K562 (cell line): ENCODE measurements at regions of chr10 and their contacts with region 1.

Region 1: DNA sequence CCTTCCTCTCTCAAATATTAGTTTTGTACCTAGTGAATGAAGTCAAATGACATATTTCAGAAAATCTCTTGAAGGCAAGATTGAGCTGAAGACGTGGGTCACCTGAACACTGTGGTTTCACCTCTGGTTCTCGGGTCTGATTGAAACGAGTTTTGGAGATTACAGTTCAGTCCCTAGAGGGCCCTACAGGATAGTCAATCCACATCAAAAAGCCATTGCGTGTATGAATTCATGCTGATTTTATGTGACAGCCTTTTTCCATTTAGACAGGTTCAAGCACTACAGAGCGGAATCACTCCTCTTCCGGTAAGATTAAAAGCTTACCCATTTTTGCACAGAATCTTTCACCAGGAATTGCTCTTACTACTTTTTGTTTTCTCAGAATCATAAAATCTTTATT is 62.2 kb downstream of the VIM start:
- DNase-seq: peak; percentile 21 to 67 (median 42)
- ATAC-seq: peak; percentile 93
- H3K4me3 ChIP-seq: no peak overlapping the region
- H3K27ac ChIP-seq: no peak overlapping the region
- H3K4me1 ChIP-seq: peaks cover 0 to 3% of the 10 kb centered on the region in 2 experiments; a peak in 1 of 5 replicates
- H3K27me3 ChIP-seq: no peaks in the 10 kb centered on the region
- CTCF ChIP-seq: peak; percentile 63 to 84 (median 63)
- EP300 ChIP-seq: no peak
- POLR2A ChIP-seq: no peak
- RAD21 ChIP-seq: peak; percentile 77 to 95

Region 2: GRCh38 chr10:16891375-16892313 is 398.6 kb before region 1 on chr10:
- CTCF ChIA-PET with region 1: no interaction called
- POLR2A ChIA-PET with region 1: no interaction called
- in situ Hi-C with region 1: no loop called
- intact Hi-C with region 1: no loop called
- DNase-seq: peak; percentile 41 to 81 (median 55)
- ATAC-seq: peak; percentile 94
- H3K4me3 ChIP-seq: peak overlapping the region; percentile 20
- H3K27ac ChIP-seq: peak overlapping the region; percentile 77
- H3K4me1 ChIP-seq: peaks cover 0 to 6% of the 10 kb centered on the region in 2 experiments; a peak in 2 of 5 replicates
- H3K27me3 ChIP-seq: 0 out of 5 replicates have a peak, but pooled peaks cover 0 to 2% of the 10 kb centered on the region in 2 experiments
- CTCF ChIP-seq: peak; percentile 65 to 83 (median 82)
- EP300 ChIP-seq: peak; percentile 50; the same call in 1 of the 2 replicates
- POLR2A ChIP-seq: peak; percentile 100
- RAD21 ChIP-seq: peak; percentile 83 to 89

Region 3: DNA sequence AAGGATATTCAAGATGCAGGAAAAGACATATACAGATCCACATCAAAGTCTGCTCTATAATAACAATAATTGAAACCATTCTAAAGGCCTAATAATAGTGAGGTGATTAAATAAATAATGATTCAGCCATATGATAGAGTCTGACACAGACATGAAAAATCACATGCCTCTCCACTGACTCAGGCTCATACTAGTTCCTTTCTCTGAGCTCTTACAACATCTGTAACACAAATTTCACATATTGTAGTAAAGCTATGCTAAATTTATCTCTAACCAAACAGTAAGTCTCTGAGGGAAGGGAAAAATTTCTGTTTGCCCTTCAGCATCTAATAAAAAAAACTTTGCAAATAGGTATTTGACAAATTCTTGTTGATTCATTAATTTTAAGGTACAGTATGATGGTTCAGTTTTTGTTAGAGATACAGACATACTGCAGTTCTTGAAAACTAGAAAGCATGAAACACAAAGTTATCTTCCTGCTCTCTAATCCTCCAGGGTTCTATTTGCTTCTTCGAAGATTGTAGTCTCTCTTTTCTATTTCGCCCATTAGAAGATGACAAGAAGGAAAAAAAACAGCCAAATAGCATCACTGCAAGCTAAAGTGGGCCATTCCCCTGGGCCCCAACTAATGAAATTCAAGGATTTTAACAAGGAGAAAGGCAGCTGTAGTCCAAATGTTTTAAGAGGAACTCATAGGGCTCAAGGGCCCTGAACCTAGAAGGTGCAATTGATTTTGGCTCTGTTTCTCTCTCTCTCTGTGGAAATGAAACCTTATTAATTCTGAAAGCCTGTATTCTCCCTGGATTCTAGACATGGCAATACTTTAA is 214.5 kb before region 1 on chr10:
- CTCF ChIA-PET with region 1: no interaction called
- POLR2A ChIA-PET with region 1: no interaction called
- in situ Hi-C with region 1: no loop called
- intact Hi-C with region 1: no loop called
- DNase-seq: no peak
- ATAC-seq: no peak
- H3K4me3 ChIP-seq: no peak overlapping the region
- H3K27ac ChIP-seq: no peak overlapping the region
- H3K4me1 ChIP-seq: peaks cover 0 to 5% of the 10 kb centered on the region in 2 experiments; a peak in 1 of 5 replicates
- H3K27me3 ChIP-seq: no peaks in the 10 kb centered on the region
- CTCF ChIP-seq: no peak
- EP300 ChIP-seq: no peak
- POLR2A ChIP-seq: no peak
- RAD21 ChIP-seq: no peak

Region 4: DNA sequence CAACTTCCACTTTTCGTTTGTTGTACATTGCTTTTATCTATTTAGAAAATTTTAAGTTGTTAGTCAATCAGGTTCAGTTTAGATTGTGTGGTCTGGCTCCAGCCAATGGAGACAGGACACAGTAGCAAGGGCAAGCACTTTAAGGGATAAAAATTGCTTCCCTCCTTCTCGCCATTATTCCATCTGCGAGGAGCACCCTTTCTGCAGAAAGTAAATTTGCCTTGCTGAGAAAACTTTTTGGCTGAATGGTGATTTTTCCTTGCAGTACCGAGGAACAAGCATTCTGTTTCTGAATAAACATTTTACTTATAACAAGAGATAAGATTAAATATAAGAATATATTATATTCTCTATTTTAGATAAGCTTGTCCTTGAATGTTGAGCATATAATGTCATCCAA is 27.7 kb before region 1 on chr10:
- CTCF ChIA-PET with region 1: no interaction called
- POLR2A ChIA-PET with region 1: no interaction called
- in situ Hi-C with region 1: no loop called
- intact Hi-C with region 1: no loop called
- DNase-seq: no peak
- ATAC-seq: no peak
- H3K4me3 ChIP-seq: no peak overlapping the region
- H3K27ac ChIP-seq: no peak overlapping the region
- H3K4me1 ChIP-seq: no peaks in the 10 kb centered on the region; a peak in 1 of 5 replicates
- H3K27me3 ChIP-seq: no peaks in the 10 kb centered on the region
- CTCF ChIP-seq: no peak
- EP300 ChIP-seq: no peak
- POLR2A ChIP-seq: no peak
- RAD21 ChIP-seq: no peak

Region 5: GRCh38 chr10:17409170-17409733 is 119.0 kb after region 1 on chr10:
- CTCF ChIA-PET with region 1: no interaction called
- POLR2A ChIA-PET with region 1: no interaction called
- in situ Hi-C with region 1: no loop called
- intact Hi-C with region 1: loop called (anchors 5 kb)
- DNase-seq: peak in 2 of 4 experiments; percentile 34 to 62
- ATAC-seq: peak; percentile 67
- H3K4me3 ChIP-seq: no peak overlapping the region
- H3K27ac ChIP-seq: no peak overlapping the region
- H3K4me1 ChIP-seq: peaks cover 14 to 29% of the 10 kb centered on the region in 2 experiments; a peak in 4 of 5 replicates
- H3K27me3 ChIP-seq: no peaks in the 10 kb centered on the region
- CTCF ChIP-seq: peak; percentile 47 to 67 (median 50); a peak in 5 of 6 replicates
- EP300 ChIP-seq: no peak
- POLR2A ChIP-seq: no peak
- RAD21 ChIP-seq: peak; percentile 63 to 79

Region 6: DNA sequence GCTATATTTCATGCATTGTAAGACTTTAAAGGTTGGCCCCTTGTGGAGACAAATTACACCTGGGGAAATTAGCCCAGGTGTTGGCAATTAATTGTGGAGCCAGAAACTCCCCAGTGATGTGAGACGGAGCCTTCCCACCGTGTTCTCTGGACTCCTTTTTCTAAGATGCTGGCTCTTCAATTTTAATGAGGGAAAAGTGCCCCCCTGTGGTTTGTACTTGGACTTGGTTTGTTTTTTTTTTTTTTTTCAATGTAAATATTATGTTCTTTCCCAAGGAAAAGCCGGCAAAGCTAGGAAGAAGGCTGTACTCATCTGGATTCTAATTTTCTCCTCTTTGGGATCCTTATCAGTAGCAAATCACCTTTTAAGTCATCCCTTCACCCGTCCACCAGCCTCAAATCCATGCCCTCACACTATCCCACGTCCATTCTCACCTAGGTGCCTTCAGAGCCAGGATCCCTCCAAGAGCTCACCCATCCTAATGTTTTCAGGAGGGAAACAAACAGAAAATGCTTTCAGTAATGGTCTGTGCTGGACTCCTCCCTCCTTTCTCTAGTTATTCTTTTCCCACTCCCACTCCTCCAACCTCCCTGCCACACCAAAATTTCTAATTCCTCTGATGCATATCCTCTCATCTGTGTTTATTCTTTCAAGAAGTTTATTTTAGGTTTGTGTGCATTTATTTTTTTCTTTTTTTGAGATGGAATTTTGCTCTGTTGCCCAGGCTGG is 184.5 kb after region 1 on chr10:
- CTCF ChIA-PET with region 1: interaction called, 10 read pairs
- POLR2A ChIA-PET with region 1: no interaction called
- in situ Hi-C with region 1: loop called (anchors 5 kb)
- intact Hi-C with region 1: loop called (anchors 1 kb)
- DNase-seq: peak; percentile 30 to 76 (median 50)
- ATAC-seq: peak; percentile 69
- H3K4me3 ChIP-seq: peak overlapping the region; percentile 26
- H3K27ac ChIP-seq: no peak overlapping the region; the same call in 1 of the 3 replicates
- H3K4me1 ChIP-seq: peaks cover 3 to 12% of the 10 kb centered on the region in 2 experiments; a peak in 2 of 5 replicates
- H3K27me3 ChIP-seq: no peaks in the 10 kb centered on the region
- CTCF ChIP-seq: peak; percentile 41 to 69 (median 46); a peak in 4 of 6 replicates
- EP300 ChIP-seq: no peak
- POLR2A ChIP-seq: no peak
- RAD21 ChIP-seq: peak; percentile 36 to 56; a peak in 3 of 4 replicates

Region 7: GRCh38 chr10:17523246-17523753 is 233.1 kb after region 1 on chr10:
- CTCF ChIA-PET with region 1: no interaction called
- POLR2A ChIA-PET with region 1: no interaction called
- in situ Hi-C with region 1: no loop called
- intact Hi-C with region 1: no loop called
- DNase-seq: no peak
- ATAC-seq: no peak
- H3K4me3 ChIP-seq: no peak overlapping the region
- H3K27ac ChIP-seq: no peak overlapping the region
- H3K4me1 ChIP-seq: 0 out of 5 replicates have a peak, but pooled peaks cover 0 to 3% of the 10 kb centered on the region in 2 experiments
- H3K27me3 ChIP-seq: no peaks in the 10 kb centered on the region
- CTCF ChIP-seq: no peak
- EP300 ChIP-seq: no peak
- POLR2A ChIP-seq: no peak
- RAD21 ChIP-seq: no peak

Region 8: GRCh38 chr10:17607603-17608332 is 317.5 kb after region 1 on chr10:
- CTCF ChIA-PET with region 1: no interaction called
- POLR2A ChIA-PET with region 1: no interaction called
- in situ Hi-C with region 1: loop called (anchors 10 kb)
- intact Hi-C with region 1: no loop called
- DNase-seq: peak; percentile 47 to 71 (median 52)
- ATAC-seq: peak; percentile 94
- H3K4me3 ChIP-seq: no peak overlapping the region
- H3K27ac ChIP-seq: no peak overlapping the region
- H3K4me1 ChIP-seq: peaks cover 0 to 2% of the 10 kb centered on the region in 2 experiments; a peak in 2 of 5 replicates
- H3K27me3 ChIP-seq: no peaks in the 10 kb centered on the region
- CTCF ChIP-seq: peak; percentile 69 to 90 (median 74)
- EP300 ChIP-seq: no peak
- POLR2A ChIP-seq: no peak
- RAD21 ChIP-seq: peak; percentile 90 to 95

Region 9: GRCh38 chr10:17872191-17873091 is 582.2 kb after region 1 on chr10:
- CTCF ChIA-PET with region 1: interaction called, 3 read pairs
- POLR2A ChIA-PET with region 1: no interaction called
- in situ Hi-C with region 1: loop called (anchors 25 kb)
- intact Hi-C with region 1: loop called (anchors 5 kb)
- DNase-seq: peak in 1 of 4 experiments; percentile 20
- ATAC-seq: 0 out of 3 replicates have a peak, but pooled peaks have one; percentile 38
- H3K4me3 ChIP-seq: no peak overlapping the region
- H3K27ac ChIP-seq: no peak overlapping the region
- H3K4me1 ChIP-seq: no peaks in the 10 kb centered on the region
- H3K27me3 ChIP-seq: no peaks in the 10 kb centered on the region; a peak in 1 of 5 replicates
- CTCF ChIP-seq: peak; percentile 29 to 70 (median 61); a peak in 5 of 6 replicates
- EP300 ChIP-seq: no peak
- POLR2A ChIP-seq: no peak
- RAD21 ChIP-seq: peak; percentile 76 to 85